ENCODE measurements at regions of chr12 and their contacts with region 1.

Region 1: DNA sequence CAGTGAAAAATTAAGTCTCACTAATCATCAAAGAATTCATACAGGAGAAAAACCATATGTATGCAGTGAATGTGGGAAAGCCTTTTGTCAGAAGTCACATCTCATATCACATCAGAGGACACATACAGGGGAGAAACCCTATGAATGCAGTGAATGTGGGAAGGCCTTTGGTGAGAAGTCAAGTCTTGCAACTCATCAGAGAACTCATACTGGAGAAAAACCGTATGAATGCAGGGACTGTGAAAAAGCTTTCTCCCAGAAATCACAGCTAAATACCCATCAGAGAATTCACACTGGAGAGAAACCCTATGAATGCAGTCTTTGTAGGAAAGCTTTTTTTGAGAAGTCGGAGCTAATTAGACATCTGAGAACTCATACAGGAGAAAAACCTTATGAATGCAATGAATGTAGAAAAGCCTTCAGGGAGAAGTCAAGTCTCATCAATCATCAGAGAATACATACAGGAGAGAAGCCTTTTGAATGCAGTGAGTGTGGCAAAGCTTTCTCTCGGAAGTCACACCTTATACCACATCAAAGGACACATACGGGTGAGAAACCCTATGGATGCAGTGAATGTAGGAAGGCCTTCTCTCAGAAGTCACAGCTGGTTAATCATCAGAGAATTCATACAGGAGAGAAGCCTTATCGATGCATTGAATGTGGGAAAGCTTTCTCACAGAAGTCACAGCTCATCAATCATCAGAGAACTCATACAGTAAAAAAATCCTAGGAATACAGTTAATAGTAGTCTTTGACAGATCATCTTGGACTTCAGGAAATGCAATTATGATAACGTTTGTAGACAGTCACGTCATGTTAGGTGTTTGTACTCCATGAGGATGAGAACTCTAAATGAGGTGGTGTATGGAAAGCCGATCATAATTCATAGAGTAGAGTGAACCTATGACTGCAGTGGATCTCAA is 21.2 kb downstream of the ZNF84 start:
- DNase-seq: no peak
- H3K4me3 ChIP-seq: peak overlapping the region in 1 of 4 experiments; percentile 42; a peak in 1 of 8 replicates
- H3K27ac ChIP-seq: no peak overlapping the region
- H3K4me1 ChIP-seq: no peaks in the 10 kb centered on the region
- H3K27me3 ChIP-seq: no peaks in the 10 kb centered on the region
- CTCF ChIP-seq: no peak
- EP300 ChIP-seq: no peak
- POLR2A ChIP-seq: peak in 1 of 2 experiments; percentile 6; a peak in 1 of 3 replicates
- RAD21 ChIP-seq: no peak

Region 2: GRCh38 chr12:133023566-133023965 is 34.9 kb before region 1 on chr12:
- CTCF ChIA-PET with region 1: no interaction called
- POLR2A ChIA-PET with region 1: no interaction called
- DNase-seq: no peak
- H3K4me3 ChIP-seq: no peak overlapping the region
- H3K27ac ChIP-seq: no peak overlapping the region
- H3K4me1 ChIP-seq: no peaks in the 10 kb centered on the region
- H3K27me3 ChIP-seq: peaks cover 0 to 2% (median 0%) of the 10 kb centered on the region in 4 experiments; a peak in 1 of 7 replicates
- CTCF ChIP-seq: no peak
- EP300 ChIP-seq: no peak
- POLR2A ChIP-seq: no peak
- RAD21 ChIP-seq: no peak

Region 3: DNA sequence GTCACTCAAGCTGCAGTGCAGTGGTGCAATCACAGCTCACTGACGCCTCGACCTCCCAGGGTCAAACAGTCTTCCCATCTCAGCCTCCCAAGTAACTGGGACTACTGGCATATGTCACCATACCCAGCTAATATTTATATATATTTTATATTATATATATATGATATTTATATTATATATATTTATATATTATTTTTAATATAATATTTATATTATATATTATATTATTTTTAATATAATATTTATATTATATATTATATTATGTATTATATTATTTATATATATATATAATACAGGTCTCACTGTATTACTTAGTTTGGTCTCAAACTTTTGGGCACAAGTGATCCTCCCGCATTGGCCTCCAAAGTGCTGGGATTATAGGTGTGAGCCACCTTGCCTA is 11.8 kb before region 1 on chr12:
- CTCF ChIA-PET with region 1: interaction called, 3 read pairs
- POLR2A ChIA-PET with region 1: interaction called, 26 read pairs
- DNase-seq: no peak
- H3K4me3 ChIP-seq: no peak overlapping the region
- H3K27ac ChIP-seq: no peak overlapping the region
- H3K4me1 ChIP-seq: no peaks in the 10 kb centered on the region
- H3K27me3 ChIP-seq: no peaks in the 10 kb centered on the region
- CTCF ChIP-seq: no peak
- EP300 ChIP-seq: no peak
- POLR2A ChIP-seq: no peak
- RAD21 ChIP-seq: no peak